Activated T-helper 1 cell treated with anti-CD3 and anti-CD28 coated beads, Interleukin-12 subunit alpha, Interleukin-12 subunit beta, Interleukin-2, Interleukin-4 antibody, amounts not matched to agents 30 ng/mL and 10 ng/mL and 1 ng/mL, durations not matched to agents 14 hours and 24 hours and 36 hours (primary cell): ENCODE measurements at regions of chr2 and their contacts with region 1.

Region 1: DNA sequence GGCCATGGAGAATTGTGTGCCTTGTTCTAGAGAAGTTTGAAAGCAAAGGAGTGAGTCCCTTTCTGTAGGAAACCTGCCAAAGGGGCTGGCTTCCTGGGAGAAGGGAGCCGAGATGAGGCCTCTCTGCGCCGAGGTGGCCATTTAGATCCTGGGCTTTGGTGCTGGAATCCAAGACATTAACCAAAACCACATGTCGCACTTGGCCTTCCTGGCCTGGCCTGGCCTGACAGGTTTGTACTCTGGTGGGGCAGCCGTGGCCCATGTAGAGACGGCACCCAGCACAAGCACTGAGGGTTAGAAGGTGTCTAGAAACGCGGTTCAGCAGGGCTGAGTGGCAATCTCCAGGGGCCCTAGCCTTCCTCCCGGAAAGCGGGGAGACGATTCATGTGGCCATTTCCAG is 7.1 kb downstream of the CNNM3 start:
- DNase-seq: no peak
- H3K4me3 Mint-ChIP-seq: no peak overlapping the region
- H3K27ac Mint-ChIP-seq: no peak overlapping the region
- H3K4me1 Mint-ChIP-seq: peaks cover 33% of the 10 kb centered on the region
- H3K27me3 Mint-ChIP-seq: no peaks in the 10 kb centered on the region

Region 2: DNA sequence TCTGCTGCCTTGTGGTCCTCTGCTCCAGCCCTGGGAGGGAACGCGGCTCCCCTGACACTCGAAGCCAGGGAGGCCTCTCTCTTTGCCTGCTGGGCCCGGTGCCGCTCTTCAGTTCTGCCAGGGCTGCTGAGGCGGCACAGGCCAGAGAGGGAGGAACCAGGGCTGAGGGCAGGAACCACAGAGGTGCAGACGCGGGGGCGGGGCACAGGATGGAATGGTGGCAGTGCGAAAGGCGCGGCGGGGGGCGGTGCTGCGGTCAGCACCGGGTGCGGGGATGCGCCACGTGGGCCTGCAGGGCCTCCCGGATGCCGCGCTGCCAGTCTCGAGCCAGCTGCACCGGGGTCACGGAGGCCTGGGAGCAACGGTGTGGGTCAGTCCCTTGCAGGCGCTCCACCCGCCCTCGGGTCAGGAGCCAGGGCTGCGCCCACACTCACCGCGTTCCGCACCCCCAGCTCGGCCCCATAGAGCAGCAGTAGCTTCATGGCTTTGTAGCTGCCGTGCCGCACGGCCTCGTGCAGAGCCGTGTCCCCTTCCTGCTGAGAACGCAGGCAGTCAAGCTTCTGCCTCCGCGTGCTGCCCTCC is 16.2 kb after region 1 on chr2:
- intact Hi-C with region 1: loop called (anchors 2 kb)
- DNase-seq: peak; percentile 74
- H3K4me3 Mint-ChIP-seq: peak overlapping the region; percentile 45
- H3K27ac Mint-ChIP-seq: peak overlapping the region; percentile 65
- H3K4me1 Mint-ChIP-seq: peaks cover 14% of the 10 kb centered on the region
- H3K27me3 Mint-ChIP-seq: no peaks in the 10 kb centered on the region

Region 3: GRCh38 chr2:96906729-96907114 is 83.5 kb after region 1 on chr2:
- intact Hi-C with region 1: no loop called
- DNase-seq: no peak
- H3K4me3 Mint-ChIP-seq: no peak overlapping the region
- H3K27ac Mint-ChIP-seq: no peak overlapping the region
- H3K4me1 Mint-ChIP-seq: peaks cover 2% of the 10 kb centered on the region
- H3K27me3 Mint-ChIP-seq: no peaks in the 10 kb centered on the region

Region 4: GRCh38 chr2:96977631-96978195 is 154.5 kb after region 1 on chr2:
- intact Hi-C with region 1: no loop called
- DNase-seq: no peak
- H3K4me3 Mint-ChIP-seq: no peak overlapping the region
- H3K27ac Mint-ChIP-seq: no peak overlapping the region
- H3K4me1 Mint-ChIP-seq: peaks cover 13% of the 10 kb centered on the region
- H3K27me3 Mint-ChIP-seq: peaks cover 3% of the 10 kb centered on the region